AG04449 (cell line): ENCODE measurements at regions of chr12 and their contacts with region 1.

Region 1: GRCh38 chr12:56104109-56104814 is at the start of gene PA2G4:
- DNase-seq: peak; percentile 85
- H3K4me3 ChIP-seq: peak within 1 kb of the TSS; percentile 88
- CTCF ChIP-seq: no peak

Region 2: GRCh38 chr12:56041552-56042429 is 62.5 kb before region 1 on chr12 and contains the start of gene RPS26:
- CTCF ChIA-PET with region 1: interaction called, 13 read pairs
- POLR2A ChIA-PET with region 1: interaction called, 11 read pairs
- DNase-seq: peak; percentile 96
- H3K4me3 ChIP-seq: peak within 1 kb of the TSS; percentile 95
- CTCF ChIP-seq: peak; percentile 64

Region 3: DNA sequence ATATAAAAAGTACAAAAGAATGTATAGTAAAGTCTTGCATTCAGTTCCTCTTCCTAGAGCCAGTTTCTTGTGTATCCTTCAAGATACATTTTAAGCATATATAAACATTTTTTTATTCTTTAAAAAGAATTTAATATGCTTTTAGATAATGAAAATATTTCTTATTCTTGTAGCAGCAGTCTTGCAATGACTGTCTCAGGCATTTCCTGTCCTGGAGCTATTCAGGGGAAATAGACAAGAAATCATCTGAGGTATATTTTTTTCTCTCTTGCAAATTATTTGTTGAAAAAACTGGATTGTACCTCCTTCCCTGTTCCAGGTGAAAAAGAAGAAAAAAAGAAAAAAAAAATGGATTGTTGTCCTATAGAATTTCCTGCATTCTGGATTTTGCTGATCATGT is 41.3 kb before region 1 on chr12:
- CTCF ChIA-PET with region 1: interaction called, 14 read pairs
- POLR2A ChIA-PET with region 1: no interaction called
- DNase-seq: no peak
- H3K4me3 ChIP-seq: no peak overlapping the region
- CTCF ChIP-seq: no peak

Region 4: GRCh38 chr12:56078990-56079664 is 25.1 kb before region 1 on chr12:
- CTCF ChIA-PET with region 1: interaction called, 18 read pairs
- POLR2A ChIA-PET with region 1: interaction called, 10 read pairs
- DNase-seq: no peak
- H3K4me3 ChIP-seq: peak overlapping the region; percentile 67
- CTCF ChIP-seq: peak; percentile 85

Region 5: GRCh38 chr12:56529290-56530055 is 425.2 kb after region 1 on chr12:
- CTCF ChIA-PET with region 1: no interaction called
- POLR2A ChIA-PET with region 1: no interaction called
- DNase-seq: no peak
- H3K4me3 ChIP-seq: no peak overlapping the region
- CTCF ChIP-seq: no peak